B cell (primary cell): ENCODE measurements at regions of chr14 and their contacts with region 1.

Region 1: GRCh38 chr14:91244501-91244901 is at the start of gene GPR68:
- DNase-seq: no peak
- ATAC-seq: no peak
- H3K4me3 ChIP-seq: peak within 1 kb of the TSS in 2 of 5 experiments; percentile 30 to 37
- H3K4me3 Mint-ChIP-seq: peak within 1 kb of the TSS; percentile 75
- H3K27ac ChIP-seq: peak within 1 kb of the TSS; percentile 57 to 79
- H3K27ac Mint-ChIP-seq: peak within 1 kb of the TSS; percentile 91
- H3K4me1 ChIP-seq: peaks cover 46 to 55% of the 10 kb centered on the region in 2 donors
- H3K4me1 Mint-ChIP-seq: peaks cover 62% of the 10 kb centered on the region
- H3K27me3 ChIP-seq: no peaks in the 10 kb centered on the region
- H3K27me3 Mint-ChIP-seq: no peaks in the 10 kb centered on the region
- CTCF ChIP-seq: no peak
- total RNA-seq, gene GPR68: 0.34 and 0.53 TPM in 2 replicates

Region 2: DNA sequence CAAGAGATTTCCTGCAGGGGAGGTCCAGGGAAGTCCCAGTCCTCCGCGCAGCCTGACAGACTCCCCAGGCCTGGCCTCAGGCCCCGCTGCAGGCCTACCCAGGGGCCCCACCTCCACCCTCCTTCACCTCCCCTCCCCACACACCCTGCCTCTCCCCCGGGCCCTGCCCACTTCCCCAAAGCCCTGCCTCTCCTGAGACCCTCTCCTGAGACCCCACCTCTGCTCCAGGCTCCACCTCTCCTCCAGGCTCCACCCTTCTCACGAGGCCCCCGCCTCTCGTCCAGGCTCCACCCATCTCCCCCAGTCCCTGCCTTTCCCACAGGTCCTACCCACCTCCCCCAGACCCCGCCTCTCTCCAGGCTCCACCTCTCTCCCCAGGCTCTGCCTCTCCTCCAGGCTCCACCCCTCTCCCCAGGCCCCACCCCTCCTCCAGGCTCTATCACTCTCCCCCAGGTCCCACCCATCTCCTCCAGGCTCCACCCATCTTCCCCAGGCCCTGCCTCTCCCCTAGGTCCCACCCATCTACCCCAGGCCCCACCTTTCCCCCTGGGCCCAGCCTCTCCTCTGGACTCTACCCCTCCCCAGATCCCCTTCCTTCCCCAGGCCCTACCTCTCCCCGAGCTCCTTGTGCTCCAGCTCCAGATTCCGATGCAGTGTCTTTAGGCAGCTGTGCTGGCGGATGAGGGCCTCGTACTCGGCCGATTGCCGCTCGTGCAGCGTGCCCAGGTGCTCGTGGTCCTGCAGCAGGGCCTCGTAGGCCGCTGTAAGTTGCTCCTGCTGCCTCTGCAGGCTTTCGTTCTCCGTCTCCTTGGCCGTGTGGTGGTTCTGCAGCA is 58.8 kb after region 1 on chr14:
- CTCF ChIA-PET with region 1: no interaction called
- POLR2A ChIA-PET with region 1: no interaction called
- intact Hi-C with region 1: no loop called
- DNase-seq: peak; percentile 50
- ATAC-seq: peak; percentile 91
- H3K4me3 ChIP-seq: no peak overlapping the region
- H3K4me3 Mint-ChIP-seq: no peak overlapping the region
- H3K27ac ChIP-seq: peak overlapping the region in 1 of 2 donors; percentile 45
- H3K27ac Mint-ChIP-seq: no peak overlapping the region
- H3K4me1 ChIP-seq: peaks cover 0 to 4% of the 10 kb centered on the region in 2 donors
- H3K4me1 Mint-ChIP-seq: peaks cover 9% of the 10 kb centered on the region
- H3K27me3 ChIP-seq: no peaks in the 10 kb centered on the region
- H3K27me3 Mint-ChIP-seq: no peaks in the 10 kb centered on the region
- CTCF ChIP-seq: no peak

Region 3: DNA sequence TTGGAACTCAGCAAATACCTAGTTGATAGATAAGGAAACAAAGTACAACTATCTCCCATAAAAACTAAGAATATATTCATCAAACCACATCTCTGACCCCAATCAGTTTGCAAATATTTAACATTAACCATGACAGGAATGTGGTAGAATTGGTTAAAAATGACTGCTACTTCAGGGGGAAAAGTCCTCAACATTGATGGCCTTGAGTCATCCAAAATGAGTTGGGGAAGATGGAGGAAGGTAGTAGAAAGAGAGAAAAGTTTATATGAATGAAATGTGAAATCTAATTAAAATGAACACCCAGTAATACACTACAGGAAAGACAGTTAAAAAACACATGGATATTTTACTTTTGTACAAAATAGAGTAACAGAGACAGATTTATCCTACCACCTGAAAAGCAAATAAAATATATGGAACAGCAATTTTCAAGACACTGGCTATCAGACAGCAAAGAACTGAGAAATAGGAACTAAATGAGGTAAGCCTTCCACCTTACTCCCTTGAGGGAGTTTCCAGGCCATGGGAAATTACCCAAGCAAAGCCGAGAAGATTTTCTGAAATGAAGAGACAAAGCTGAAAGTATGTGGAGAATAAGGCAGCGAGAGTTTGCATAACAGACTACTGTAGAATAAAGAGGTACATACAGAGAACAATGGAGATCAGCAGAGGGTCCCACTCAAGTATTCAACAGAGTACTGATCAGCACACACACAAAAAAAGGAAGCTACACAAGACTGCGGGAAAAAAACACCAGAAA is 573.2 kb after region 1 on chr14:
- CTCF ChIA-PET with region 1: no interaction called
- POLR2A ChIA-PET with region 1: no interaction called
- intact Hi-C with region 1: loop called (anchors 5 kb)
- DNase-seq: peak; percentile 78
- ATAC-seq: peak; percentile 93
- H3K4me3 ChIP-seq: peak overlapping the region in 1 of 5 experiments; percentile 8
- H3K4me3 Mint-ChIP-seq: peak overlapping the region; percentile 33
- H3K27ac ChIP-seq: peak overlapping the region; percentile 12 to 64
- H3K27ac Mint-ChIP-seq: peak overlapping the region; percentile 5
- H3K4me1 ChIP-seq: peaks cover 11 to 19% of the 10 kb centered on the region in 2 donors
- H3K4me1 Mint-ChIP-seq: peaks cover 17% of the 10 kb centered on the region
- H3K27me3 ChIP-seq: no peaks in the 10 kb centered on the region
- H3K27me3 Mint-ChIP-seq: peaks cover 11% of the 10 kb centered on the region
- CTCF ChIP-seq: no peak